WTC11 (cell line): ENCODE measurements at regions of chr17 and their contacts with region 1.

Region 1: DNA sequence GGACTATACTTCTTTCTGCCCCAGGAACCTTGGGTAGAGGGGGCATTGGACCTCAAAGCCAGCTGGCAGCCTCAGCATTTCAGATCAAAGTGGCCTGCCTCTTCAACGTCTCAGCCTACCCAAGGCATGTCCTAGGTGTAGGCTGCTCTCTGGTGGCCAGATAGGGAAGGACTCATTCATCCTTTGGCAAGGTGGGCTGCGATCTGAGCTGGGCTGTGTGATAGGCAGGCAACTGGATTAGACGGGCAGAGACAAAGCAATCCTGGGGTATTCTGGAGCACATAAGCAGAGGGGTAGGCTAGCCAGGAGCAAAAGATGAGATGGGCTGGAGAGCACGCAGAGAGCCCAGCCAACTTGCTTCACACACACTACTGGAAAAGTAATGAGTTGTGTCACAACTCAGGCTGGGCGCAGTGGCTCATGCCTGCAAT is 8.8 kb upstream of the NAGLU start:
- DNase-seq: peak; percentile 86
- ATAC-seq: peak; percentile 95
- H3K4me3 Mint-ChIP-seq: no peak overlapping the region
- H3K27ac Mint-ChIP-seq: no peak overlapping the region
- H3K4me1 Mint-ChIP-seq: peaks cover 4% of the 10 kb centered on the region
- H3K27me3 Mint-ChIP-seq: peaks cover 21% of the 10 kb centered on the region
- CTCF ChIP-seq: peak; percentile 79

Region 2: GRCh38 chr17:42312285-42313130 is 214.8 kb before region 1 on chr17:
- CTCF ChIA-PET with region 1: interaction called, 22 read pairs
- POLR2A ChIA-PET with region 1: no interaction called
- DNase-seq: peak; percentile 93
- ATAC-seq: peak; percentile 86
- H3K4me3 Mint-ChIP-seq: peak overlapping the region; percentile 38; the same call in 1 of the 2 replicates
- H3K27ac Mint-ChIP-seq: no peak overlapping the region
- H3K4me1 Mint-ChIP-seq: peaks cover 33% of the 10 kb centered on the region
- H3K27me3 Mint-ChIP-seq: no peaks in the 10 kb centered on the region
- CTCF ChIP-seq: no peak

Region 3: GRCh38 chr17:42428141-42428944 is 98.9 kb before region 1 on chr17:
- CTCF ChIA-PET with region 1: interaction called, 18 read pairs
- POLR2A ChIA-PET with region 1: interaction called, 3 read pairs
- DNase-seq: peak; percentile 59
- ATAC-seq: peak; percentile 83
- H3K4me3 Mint-ChIP-seq: no peak overlapping the region
- H3K27ac Mint-ChIP-seq: peak overlapping the region; percentile 92
- H3K4me1 Mint-ChIP-seq: peaks cover 25% of the 10 kb centered on the region
- H3K27me3 Mint-ChIP-seq: peaks cover 24% of the 10 kb centered on the region
- CTCF ChIP-seq: peak; percentile 50; the same call in 1 of the 2 replicates

Region 4: DNA sequence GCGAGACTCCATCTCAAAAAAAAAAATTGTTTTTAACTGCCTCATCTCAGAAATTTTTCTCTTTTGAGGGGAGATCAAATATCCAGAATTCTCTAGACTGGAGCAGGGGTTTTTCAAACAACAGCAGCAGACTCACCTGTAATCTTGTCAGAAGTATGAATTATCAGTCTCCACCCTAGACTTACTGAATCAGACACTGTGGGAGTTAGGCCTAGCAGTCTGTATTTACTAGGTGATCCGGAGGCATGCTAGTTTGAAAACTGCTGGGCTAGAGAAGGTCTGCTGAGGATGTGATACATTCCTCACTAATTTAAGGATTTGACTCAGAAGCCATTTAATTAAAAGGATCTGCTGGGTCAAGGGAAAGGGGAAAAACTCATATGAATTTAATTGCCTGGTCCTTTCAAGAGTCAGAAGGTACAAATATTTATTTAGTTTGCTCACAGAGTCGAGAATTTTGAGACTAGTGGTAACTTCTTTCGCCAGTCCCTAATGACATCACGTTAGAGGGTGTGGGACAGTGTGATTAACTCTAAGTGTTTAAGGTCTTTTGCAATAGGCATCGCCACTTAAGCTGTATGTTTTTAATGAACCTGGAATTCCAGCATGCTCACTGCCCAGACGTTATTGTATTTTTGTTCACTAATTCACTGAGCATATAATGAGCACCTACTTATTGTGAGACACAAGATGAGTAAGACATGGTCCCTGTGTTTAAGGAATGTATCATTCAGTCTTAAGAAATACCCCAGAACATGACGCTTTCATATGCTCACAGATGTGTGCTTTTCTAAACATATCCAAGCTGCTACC is 54.4 kb before region 1 on chr17:
- CTCF ChIA-PET with region 1: interaction called, 10 read pairs
- POLR2A ChIA-PET with region 1: no interaction called
- DNase-seq: no peak
- ATAC-seq: no peak
- H3K4me3 Mint-ChIP-seq: no peak overlapping the region
- H3K27ac Mint-ChIP-seq: no peak overlapping the region
- H3K4me1 Mint-ChIP-seq: no peaks in the 10 kb centered on the region
- H3K27me3 Mint-ChIP-seq: no peaks in the 10 kb centered on the region
- CTCF ChIP-seq: no peak

Region 5: DNA sequence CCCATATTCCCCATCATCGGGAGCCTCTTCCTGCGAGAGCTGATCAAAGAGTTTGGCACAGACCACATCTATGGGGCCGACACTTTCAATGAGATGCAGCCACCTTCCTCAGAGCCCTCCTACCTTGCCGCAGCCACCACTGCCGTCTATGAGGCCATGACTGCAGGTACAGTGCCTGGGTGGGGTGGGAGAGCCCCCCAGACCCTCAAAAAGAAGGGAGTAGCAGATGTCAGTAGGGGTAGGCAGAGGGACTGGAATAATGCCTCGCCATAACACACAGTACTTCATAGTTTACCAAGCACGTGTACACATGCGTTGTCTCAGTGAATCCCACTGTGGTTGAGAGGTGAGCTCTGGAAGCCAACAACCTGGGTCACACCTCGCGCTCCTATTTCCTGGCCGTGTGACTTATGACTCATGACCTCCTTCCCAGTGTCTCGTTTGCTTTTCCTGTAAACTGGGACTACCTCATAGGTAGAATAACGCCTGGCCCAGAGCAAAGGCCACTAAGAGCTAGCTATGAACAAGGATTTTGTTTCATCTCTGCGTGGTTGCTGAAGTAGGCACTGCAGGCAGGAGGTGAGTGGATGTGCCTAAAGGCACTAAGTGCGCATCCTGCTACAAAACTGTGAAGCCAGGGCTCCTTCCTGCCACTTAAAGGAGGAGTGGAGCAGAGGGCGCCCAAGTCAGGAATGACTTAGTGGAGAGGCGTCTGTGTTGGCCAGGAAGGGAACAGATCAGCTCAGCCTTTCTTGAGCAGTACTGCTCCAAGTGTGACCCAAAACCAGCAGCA is 13.9 kb after region 1 on chr17:
- CTCF ChIA-PET with region 1: interaction called, 36 read pairs
- POLR2A ChIA-PET with region 1: no interaction called
- DNase-seq: no peak
- ATAC-seq: no peak; the same call in 1 of the 2 replicates
- H3K4me3 Mint-ChIP-seq: no peak overlapping the region
- H3K27ac Mint-ChIP-seq: 0 out of 2 replicates have a peak overlapping the region, but pooled peaks have one; percentile 21
- H3K4me1 Mint-ChIP-seq: peaks cover 15% of the 10 kb centered on the region
- H3K27me3 Mint-ChIP-seq: no peaks in the 10 kb centered on the region
- CTCF ChIP-seq: no peak

Region 6: GRCh38 chr17:42598905-42599304 is 71.6 kb after region 1 on chr17:
- CTCF ChIA-PET with region 1: no interaction called
- POLR2A ChIA-PET with region 1: no interaction called
- DNase-seq: no peak
- ATAC-seq: no peak
- H3K4me3 Mint-ChIP-seq: no peak overlapping the region
- H3K27ac Mint-ChIP-seq: peak overlapping the region; percentile 88
- H3K4me1 Mint-ChIP-seq: no peaks in the 10 kb centered on the region
- H3K27me3 Mint-ChIP-seq: no peaks in the 10 kb centered on the region
- CTCF ChIP-seq: no peak